PC-9 (cell line): ENCODE measurements at regions of chr14 and their contacts with region 1.

Region 1: GRCh38 chr14:76015668-76016067 is 30.1 kb downstream of the IFT43 start:
- DNase-seq: no peak
- H3K4me3 ChIP-seq: no peak overlapping the region
- H3K27ac ChIP-seq: no peak overlapping the region
- H3K4me1 ChIP-seq: no peaks in the 10 kb centered on the region
- H3K27me3 ChIP-seq: no peaks in the 10 kb centered on the region
- CTCF ChIP-seq: no peak

Region 2: GRCh38 chr14:75689012-75689411 is 326.7 kb before region 1 on chr14:
- CTCF ChIA-PET with region 1: no interaction called
- POLR2A ChIA-PET with region 1: interaction called, 15 read pairs
- intact Hi-C with region 1: no loop called
- DNase-seq: no peak
- H3K4me3 ChIP-seq: no peak overlapping the region
- H3K27ac ChIP-seq: no peak overlapping the region
- H3K4me1 ChIP-seq: no peaks in the 10 kb centered on the region
- H3K27me3 ChIP-seq: no peaks in the 10 kb centered on the region
- CTCF ChIP-seq: no peak

Region 3: DNA sequence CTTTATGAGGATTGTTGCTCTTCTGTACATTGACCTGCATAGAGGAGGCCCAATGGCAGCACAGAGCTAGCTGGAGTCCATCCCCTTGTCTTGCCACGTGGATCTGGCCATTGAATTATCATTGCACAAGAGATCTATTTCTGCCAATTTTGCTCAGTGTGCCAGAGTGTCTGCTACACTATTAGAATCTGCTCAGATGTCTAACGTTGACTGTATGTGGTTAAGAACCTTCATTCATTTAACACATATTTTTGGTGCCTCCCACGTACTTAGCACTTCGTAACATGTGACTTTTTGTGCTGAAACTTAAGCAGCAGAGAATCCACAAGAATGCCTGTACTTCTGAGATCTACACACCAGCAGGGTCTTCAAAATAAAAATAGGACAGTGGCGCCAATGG is 579.6 kb after region 1 on chr14:
- CTCF ChIA-PET with region 1: no interaction called
- POLR2A ChIA-PET with region 1: no interaction called
- intact Hi-C with region 1: no loop called
- DNase-seq: no peak
- H3K4me3 ChIP-seq: no peak overlapping the region
- H3K27ac ChIP-seq: no peak overlapping the region
- H3K4me1 ChIP-seq: no peaks in the 10 kb centered on the region
- H3K27me3 ChIP-seq: peaks cover 97% of the 10 kb centered on the region
- CTCF ChIP-seq: no peak

Region 4: DNA sequence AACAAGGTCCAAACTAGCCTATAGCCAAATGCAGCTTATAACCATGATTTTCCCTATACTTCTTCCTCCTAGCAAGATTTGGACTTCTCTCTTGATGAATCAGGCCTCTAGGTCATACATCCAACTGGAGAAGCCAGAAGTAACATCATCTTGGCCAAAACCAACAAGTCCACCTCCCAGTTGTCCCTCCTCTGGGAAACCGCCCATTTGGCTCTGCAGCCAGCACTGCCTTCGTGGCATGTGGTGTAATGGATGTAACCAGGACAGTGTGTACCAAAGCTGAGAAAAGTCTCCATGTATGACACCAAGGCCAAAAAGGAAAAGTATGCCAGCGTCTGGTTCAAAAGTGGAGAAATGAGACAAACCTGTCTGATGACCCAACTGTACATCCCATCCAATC is 686.3 kb after region 1 on chr14:
- CTCF ChIA-PET with region 1: no interaction called
- POLR2A ChIA-PET with region 1: no interaction called
- intact Hi-C with region 1: no loop called
- DNase-seq: no peak
- H3K4me3 ChIP-seq: no peak overlapping the region
- H3K27ac ChIP-seq: no peak overlapping the region
- H3K4me1 ChIP-seq: no peaks in the 10 kb centered on the region
- H3K27me3 ChIP-seq: peaks cover 100% of the 10 kb centered on the region
- CTCF ChIP-seq: no peak